ENCODE measurements at regions of chr6 and their contacts with region 1.

Region 1: GRCh38 chr6:26532699-26533531 is 5.3 kb upstream of the HMGN4 start:
- DNase-seq: peak; percentile 97
- H3K4me3 Mint-ChIP-seq: peak overlapping the region; percentile 95
- H3K27ac Mint-ChIP-seq: peak overlapping the region; percentile 89
- H3K4me1 Mint-ChIP-seq: peaks cover 40% of the 10 kb centered on the region
- H3K27me3 Mint-ChIP-seq: no peaks in the 10 kb centered on the region

Region 2: DNA sequence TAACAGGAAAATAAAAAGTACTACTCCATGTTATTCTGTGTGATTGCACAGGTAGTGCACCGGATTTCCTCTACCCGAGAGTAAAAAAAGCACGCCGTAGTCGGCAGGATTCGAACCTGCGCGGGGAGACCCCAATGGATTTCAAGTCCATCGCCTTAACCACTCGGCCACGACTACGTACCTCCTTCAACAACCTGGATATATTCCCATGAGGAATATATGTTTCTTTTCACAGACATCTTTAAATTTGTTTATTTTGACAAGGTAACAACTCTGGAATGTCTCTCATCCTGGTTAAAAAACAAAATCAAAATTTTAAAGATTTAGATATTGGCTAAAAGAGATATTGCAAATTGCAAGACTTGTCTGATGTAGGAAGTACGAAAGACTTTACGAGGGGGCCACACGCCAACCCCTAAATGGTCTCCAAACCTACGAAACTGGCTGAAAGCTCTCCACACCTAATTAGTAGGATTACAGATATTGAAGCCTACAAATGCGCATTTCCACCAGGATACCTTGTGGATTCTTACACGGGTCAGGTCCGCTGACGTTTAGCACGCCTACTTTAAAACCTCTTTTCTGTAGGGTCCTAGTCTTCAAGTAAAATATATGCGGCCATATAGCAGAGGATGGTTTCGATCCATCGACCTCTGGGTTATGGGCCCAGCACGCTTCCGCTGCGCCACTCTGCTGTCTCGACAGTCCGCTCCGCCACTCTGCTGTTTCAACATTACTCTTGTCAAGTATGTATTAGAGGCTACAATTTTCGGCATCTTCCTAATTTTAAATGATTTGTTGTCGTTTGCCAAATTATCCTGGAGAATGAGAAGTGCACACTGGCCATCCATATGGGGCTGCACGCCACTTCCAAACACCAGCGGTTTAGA is 220.2 kb before region 1 on chr6:
- CTCF ChIA-PET with region 1: no interaction called
- intact Hi-C with region 1: loop called (anchors 2 kb)
- DNase-seq: peak; percentile 95
- H3K4me3 Mint-ChIP-seq: peak overlapping the region; percentile 81
- H3K27ac Mint-ChIP-seq: peak overlapping the region; percentile 83
- H3K4me1 Mint-ChIP-seq: peaks cover 28% of the 10 kb centered on the region
- H3K27me3 Mint-ChIP-seq: no peaks in the 10 kb centered on the region

Region 3: GRCh38 chr6:26520853-26521599 is 11.9 kb before region 1 on chr6:
- CTCF ChIA-PET with region 1: interaction called, 3 read pairs
- intact Hi-C with region 1: loop called (anchors 1 kb)
- DNase-seq: peak; percentile 90
- H3K4me3 Mint-ChIP-seq: peak overlapping the region; percentile 76
- H3K27ac Mint-ChIP-seq: peak overlapping the region; percentile 94
- H3K4me1 Mint-ChIP-seq: peaks cover 27% of the 10 kb centered on the region
- H3K27me3 Mint-ChIP-seq: peaks cover 2% of the 10 kb centered on the region

Measured in activated naive CD4-positive, alpha-beta T cell treated with anti-CD3 and anti-CD28 coated beads for 36 hours (primary cell).